ENCODE measurements at regions of chr2 and their contacts with region 1.

Region 1: DNA sequence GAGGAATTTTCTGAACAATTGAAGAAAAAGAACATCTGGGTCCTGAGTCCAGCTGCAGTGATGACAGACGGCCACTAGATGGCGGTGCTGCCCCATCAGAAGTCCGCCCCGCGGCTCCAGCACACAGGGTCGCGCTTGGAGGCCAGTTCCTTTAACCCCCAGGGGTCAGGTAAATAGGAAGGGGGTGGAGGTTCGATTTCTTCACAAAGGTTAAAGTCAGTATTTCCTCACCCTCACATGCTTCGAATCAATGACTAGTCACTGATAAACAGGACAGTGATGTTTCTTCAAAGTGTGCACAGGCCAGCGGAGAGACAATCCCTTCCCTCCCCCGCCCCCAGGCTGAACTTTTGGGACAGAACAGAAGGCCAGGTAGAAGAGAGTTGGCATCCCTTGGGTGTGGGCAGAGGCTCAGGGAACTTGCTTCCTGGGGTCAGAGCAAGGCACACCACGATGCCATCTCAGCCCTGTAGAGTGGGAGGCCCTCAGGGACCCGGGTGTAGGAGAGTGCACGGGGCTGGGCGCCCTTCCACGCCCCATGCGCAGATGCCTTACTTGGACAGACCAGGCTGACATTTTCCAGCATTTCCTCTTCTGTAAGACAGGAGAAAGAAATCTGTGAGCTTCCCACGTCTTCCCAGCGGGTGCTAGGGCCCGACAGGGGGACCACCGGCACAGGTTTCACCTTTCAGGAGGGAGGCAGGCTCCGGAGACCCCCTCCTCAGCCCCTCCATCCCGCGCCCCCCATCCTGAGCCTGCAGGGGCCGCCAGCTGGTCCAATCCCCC is 722 bp downstream of the APOB start:
- DNase-seq: peak; percentile 5
- H3K4me3 ChIP-seq: no peak overlapping the region
- H3K27ac ChIP-seq: no peak overlapping the region
- H3K4me1 ChIP-seq: no peaks in the 10 kb centered on the region
- H3K27me3 ChIP-seq: peaks cover 1% of the 10 kb centered on the region
- CTCF ChIP-seq: peak; percentile 86 to 98

Region 2: DNA sequence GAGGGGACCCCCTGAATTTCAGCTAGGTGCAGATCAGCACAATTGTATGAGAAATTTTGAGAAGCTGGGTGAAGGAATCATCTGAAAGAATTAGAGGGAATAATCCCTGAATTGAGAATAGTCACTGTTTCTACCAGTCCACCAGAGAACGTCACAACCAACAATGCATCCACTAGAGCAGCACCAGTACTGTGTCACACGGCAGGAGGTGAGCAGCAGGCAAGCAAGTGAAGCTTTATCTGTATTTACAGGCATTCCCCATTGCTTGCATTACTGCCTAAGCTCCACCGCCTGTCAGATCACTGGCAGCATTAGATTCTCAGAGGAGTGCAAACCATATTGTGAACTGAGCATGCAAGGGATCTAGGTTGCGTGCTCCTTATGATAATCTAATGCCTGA is 335.6 kb before region 1 on chr2:
- CTCF ChIA-PET with region 1: no interaction called
- dilution Hi-C with region 1: no loop called
- in situ Hi-C with region 1: no loop called
- intact Hi-C with region 1: no loop called
- DNase-seq: no peak
- H3K4me3 ChIP-seq: no peak overlapping the region
- H3K27ac ChIP-seq: no peak overlapping the region
- H3K4me1 ChIP-seq: no peaks in the 10 kb centered on the region
- H3K27me3 ChIP-seq: no peaks in the 10 kb centered on the region
- CTCF ChIP-seq: no peak

Region 3: DNA sequence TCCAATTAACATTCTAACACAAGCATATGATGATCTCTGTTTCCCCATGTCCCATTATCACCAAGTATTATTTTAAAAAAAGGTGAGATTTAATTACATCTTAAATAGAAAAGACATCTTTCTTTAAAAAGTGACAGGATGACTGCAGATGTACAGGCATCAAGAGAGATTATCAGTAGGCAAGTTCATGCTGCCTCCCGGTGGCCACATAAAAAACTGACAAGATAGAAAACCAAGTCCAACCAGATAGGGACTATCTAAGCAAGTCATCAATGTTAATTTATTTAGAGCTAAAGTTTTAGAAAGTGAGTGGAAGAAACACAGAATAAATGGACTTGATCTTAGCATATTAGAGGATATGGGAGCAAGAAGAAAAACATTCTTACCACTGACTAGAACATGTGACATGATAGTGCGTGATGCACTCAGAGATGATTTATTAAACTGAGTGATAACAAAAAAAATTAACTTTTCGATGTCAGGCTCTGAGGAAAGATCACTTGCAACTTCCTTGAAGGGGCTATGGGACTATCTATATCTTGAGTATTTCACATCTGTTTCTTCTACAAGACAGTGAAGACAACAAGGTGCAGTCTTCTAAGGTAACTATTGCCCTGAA is 75.3 kb after region 1 on chr2:
- CTCF ChIA-PET with region 1: interaction called, 3 read pairs
- dilution Hi-C with region 1: no loop called
- in situ Hi-C with region 1: no loop called
- intact Hi-C with region 1: loop called (anchors 1 kb)
- DNase-seq: peak; percentile 11
- H3K4me3 ChIP-seq: no peak overlapping the region
- H3K27ac ChIP-seq: no peak overlapping the region
- H3K4me1 ChIP-seq: no peaks in the 10 kb centered on the region
- H3K27me3 ChIP-seq: no peaks in the 10 kb centered on the region
- CTCF ChIP-seq: peak; percentile 35 to 62

Region 4: DNA sequence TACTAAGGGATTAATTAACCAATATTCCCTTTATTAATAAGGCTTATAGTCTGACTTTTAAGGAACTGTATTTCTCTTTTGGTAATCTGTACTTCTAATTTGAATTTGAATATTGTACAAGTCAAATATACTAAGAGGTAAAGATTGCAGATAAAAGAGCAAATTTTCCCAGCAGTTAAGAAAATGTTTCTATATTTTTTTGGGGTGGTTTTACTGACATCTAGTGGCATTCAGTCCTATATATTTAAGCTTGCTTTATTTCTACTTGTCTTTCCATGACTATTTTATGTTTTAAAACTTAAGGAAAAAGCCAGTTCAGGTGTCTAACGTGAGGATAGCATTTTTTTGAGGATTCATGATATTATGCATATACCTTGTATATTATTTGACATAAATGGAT is 122.2 kb after region 1 on chr2:
- CTCF ChIA-PET with region 1: no interaction called
- dilution Hi-C with region 1: no loop called
- in situ Hi-C with region 1: no loop called
- intact Hi-C with region 1: loop called (anchors 1 kb)
- DNase-seq: no peak
- H3K4me3 ChIP-seq: no peak overlapping the region
- H3K27ac ChIP-seq: no peak overlapping the region
- H3K4me1 ChIP-seq: no peaks in the 10 kb centered on the region
- H3K27me3 ChIP-seq: no peaks in the 10 kb centered on the region
- CTCF ChIP-seq: peak; percentile 17 to 37

Region 5: DNA sequence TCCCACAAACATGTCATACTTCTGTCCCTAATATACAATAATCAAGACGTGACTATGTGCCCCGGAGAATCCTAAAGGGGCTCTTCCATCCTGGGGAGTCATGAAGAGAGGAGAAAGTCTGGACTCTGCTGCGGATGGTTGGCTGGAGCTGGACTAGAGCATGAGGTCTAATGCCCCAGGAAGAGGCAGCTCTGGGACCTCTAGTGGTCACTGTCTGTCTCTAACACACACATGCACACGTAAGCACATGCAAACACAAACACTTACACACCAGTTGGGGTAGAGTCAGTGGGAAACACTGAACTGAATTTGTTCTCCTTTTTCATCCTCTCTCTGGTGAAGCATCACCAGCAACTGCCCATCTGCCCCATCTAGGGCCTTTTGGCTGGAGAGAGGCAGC is 352.2 kb after region 1 on chr2:
- CTCF ChIA-PET with region 1: no interaction called
- dilution Hi-C with region 1: no loop called
- in situ Hi-C with region 1: no loop called
- intact Hi-C with region 1: loop called (anchors 5 kb)
- DNase-seq: no peak
- H3K4me3 ChIP-seq: no peak overlapping the region
- H3K27ac ChIP-seq: no peak overlapping the region
- H3K4me1 ChIP-seq: no peaks in the 10 kb centered on the region
- H3K27me3 ChIP-seq: no peaks in the 10 kb centered on the region
- CTCF ChIP-seq: peak; percentile 20 to 39